ENCODE measurements at regions of chr3 and their contacts with region 1.

Region 1: GRCh38 chr3:47522082-47522987 is 8.8 kb upstream of the ELP6 start:
- DNase-seq: peak; percentile 91
- H3K4me3 Mint-ChIP-seq: no peak overlapping the region
- H3K27ac Mint-ChIP-seq: no peak overlapping the region
- H3K4me1 Mint-ChIP-seq: no peaks in the 10 kb centered on the region
- H3K27me3 Mint-ChIP-seq: no peaks in the 10 kb centered on the region

Region 2: GRCh38 chr3:47578119-47578632 is 55.8 kb after region 1 on chr3:
- CTCF ChIA-PET with region 1: no interaction called
- intact Hi-C with region 1: loop called (anchors 5 kb)
- DNase-seq: peak; percentile 27
- H3K4me3 Mint-ChIP-seq: peak overlapping the region; percentile 61
- H3K27ac Mint-ChIP-seq: no peak overlapping the region
- H3K4me1 Mint-ChIP-seq: no peaks in the 10 kb centered on the region
- H3K27me3 Mint-ChIP-seq: peaks cover 21% of the 10 kb centered on the region

Region 3: GRCh38 chr3:47791193-47791855 is 269.0 kb after region 1 on chr3:
- CTCF ChIA-PET with region 1: interaction called, 29 read pairs
- intact Hi-C with region 1: loop called (anchors 1 kb)
- DNase-seq: no peak
- H3K4me3 Mint-ChIP-seq: no peak overlapping the region
- H3K27ac Mint-ChIP-seq: no peak overlapping the region
- H3K4me1 Mint-ChIP-seq: no peaks in the 10 kb centered on the region
- H3K27me3 Mint-ChIP-seq: no peaks in the 10 kb centered on the region

Region 4: DNA sequence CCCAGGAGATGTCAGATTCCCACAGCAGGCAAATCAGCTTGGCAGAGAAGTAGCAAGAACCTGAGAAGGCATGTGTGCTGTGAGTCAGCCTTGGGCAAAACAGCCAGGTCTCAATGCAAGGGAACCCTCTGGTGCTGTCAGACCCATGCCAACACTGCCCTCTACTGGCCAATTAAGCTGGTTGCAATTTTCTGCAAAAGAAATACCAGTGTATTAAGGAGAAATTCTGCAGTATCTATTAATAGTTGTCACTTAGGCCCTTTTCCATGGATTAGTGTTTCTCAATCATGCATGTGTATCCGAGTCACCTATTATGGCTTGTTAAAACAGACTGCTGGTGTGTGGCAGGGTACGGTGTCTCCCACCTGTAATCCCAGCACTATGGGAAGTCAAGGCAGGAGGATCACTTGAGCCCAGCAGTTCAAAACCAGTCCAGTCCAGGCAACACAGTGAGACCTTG is 467.7 kb after region 1 on chr3:
- CTCF ChIA-PET with region 1: interaction called, 6 read pairs
- intact Hi-C with region 1: loop called (anchors 1 kb)
- DNase-seq: peak; percentile 86
- H3K4me3 Mint-ChIP-seq: no peak overlapping the region
- H3K27ac Mint-ChIP-seq: no peak overlapping the region
- H3K4me1 Mint-ChIP-seq: peaks cover 4% of the 10 kb centered on the region
- H3K27me3 Mint-ChIP-seq: no peaks in the 10 kb centered on the region